ENCODE measurements at regions of chr7 and their contacts with region 1.

Region 1: DNA sequence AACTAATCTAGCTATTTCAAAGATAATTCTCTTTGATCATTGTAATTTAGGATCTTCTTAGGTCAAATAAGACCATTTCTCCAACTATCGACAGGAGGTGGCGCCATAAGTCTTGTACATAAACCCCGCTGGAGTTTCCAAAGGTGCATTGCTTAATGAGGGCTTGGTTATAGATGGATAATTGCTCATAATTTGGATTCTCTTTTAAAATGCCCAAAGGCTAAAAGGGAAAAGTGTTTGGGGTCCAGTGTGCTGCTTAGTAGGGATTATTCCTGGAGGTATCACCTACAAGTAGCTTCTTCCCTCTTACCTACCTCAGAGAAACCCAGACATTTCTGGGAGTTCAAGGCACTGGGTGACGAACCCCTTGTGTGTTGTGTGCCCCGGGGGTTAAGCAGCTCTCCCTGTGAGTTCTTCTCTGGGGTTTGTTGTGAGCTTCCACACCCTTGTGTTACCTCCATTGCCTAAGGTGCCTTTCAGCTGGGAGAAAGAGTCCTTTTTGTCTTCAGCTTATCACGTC is 75.2 kb downstream of the PAXIP1 start:
- DNase-seq: peak; percentile 77 to 92 (median 80)
- ATAC-seq: peak; percentile 87
- H3K4me3 ChIP-seq: peak overlapping the region; percentile 47
- H3K27ac ChIP-seq: peak overlapping the region; percentile 23
- H3K4me1 ChIP-seq: peaks cover 6 to 8% of the 10 kb centered on the region in 2 experiments; a peak in 3 of 5 replicates
- H3K27me3 ChIP-seq: peaks cover 0 to 11% of the 10 kb centered on the region in 2 experiments; a peak in 2 of 5 replicates
- CTCF ChIP-seq: peak; percentile 77 to 94 (median 80)
- EP300 ChIP-seq: no peak
- POLR2A ChIP-seq: no peak
- RAD21 ChIP-seq: peak; percentile 91 to 94

Region 2: GRCh38 chr7:154953006-154953684 is 25.5 kb after region 1 on chr7:
- CTCF ChIA-PET with region 1: interaction called, 14 read pairs
- POLR2A ChIA-PET with region 1: interaction called, 7 read pairs
- in situ Hi-C with region 1: no loop called
- intact Hi-C with region 1: no loop called
- DNase-seq: peak; percentile 65 to 80 (median 75)
- ATAC-seq: peak; percentile 98
- H3K4me3 ChIP-seq: no peak overlapping the region
- H3K27ac ChIP-seq: no peak overlapping the region
- H3K4me1 ChIP-seq: no peaks in the 10 kb centered on the region
- H3K27me3 ChIP-seq: no peaks in the 10 kb centered on the region
- CTCF ChIP-seq: peak; percentile 82 to 94 (median 88)
- EP300 ChIP-seq: no peak
- POLR2A ChIP-seq: no peak
- RAD21 ChIP-seq: peak; percentile 28 to 40; a peak in 2 of 4 replicates

Region 3: GRCh38 chr7:155084969-155085368 is 157.3 kb after region 1 on chr7:
- CTCF ChIA-PET with region 1: no interaction called
- POLR2A ChIA-PET with region 1: no interaction called
- in situ Hi-C with region 1: no loop called
- intact Hi-C with region 1: no loop called
- DNase-seq: no peak
- ATAC-seq: no peak
- H3K4me3 ChIP-seq: no peak overlapping the region
- H3K27ac ChIP-seq: no peak overlapping the region
- H3K4me1 ChIP-seq: no peaks in the 10 kb centered on the region
- H3K27me3 ChIP-seq: peaks cover 14 to 43% of the 10 kb centered on the region in 2 experiments
- CTCF ChIP-seq: no peak
- EP300 ChIP-seq: no peak
- POLR2A ChIP-seq: no peak
- RAD21 ChIP-seq: no peak

Region 4: DNA sequence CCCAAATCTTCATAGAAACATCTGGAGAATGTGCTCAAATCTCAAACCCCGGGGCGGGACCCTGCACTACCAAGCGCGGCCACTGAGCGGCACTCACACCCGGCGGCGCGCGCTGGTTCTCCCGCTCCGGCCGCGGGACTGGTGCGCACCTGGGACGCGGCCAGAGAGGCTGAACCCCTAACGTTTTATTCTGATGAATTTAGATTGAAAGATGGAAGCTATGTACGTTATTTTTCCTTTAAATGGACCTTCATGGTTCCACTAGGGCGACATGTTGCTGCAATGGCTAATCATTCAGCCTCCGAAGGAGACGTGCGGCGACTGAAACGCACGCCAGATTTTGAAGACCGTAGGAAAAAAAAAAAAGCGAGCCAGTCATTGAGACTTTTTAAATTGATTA is 263.0 kb after region 1 on chr7:
- CTCF ChIA-PET with region 1: no interaction called
- POLR2A ChIA-PET with region 1: no interaction called
- in situ Hi-C with region 1: no loop called
- intact Hi-C with region 1: loop called (anchors 5 kb)
- DNase-seq: peak; percentile 72 to 92 (median 89)
- ATAC-seq: peak; percentile 93
- H3K4me3 ChIP-seq: no peak overlapping the region
- H3K27ac ChIP-seq: no peak overlapping the region
- H3K4me1 ChIP-seq: peaks cover 0 to 7% of the 10 kb centered on the region in 2 experiments; a peak in 2 of 5 replicates
- H3K27me3 ChIP-seq: peaks cover 36 to 62% of the 10 kb centered on the region in 2 experiments
- CTCF ChIP-seq: peak; percentile 92 to 97 (median 95)
- EP300 ChIP-seq: no peak
- POLR2A ChIP-seq: no peak
- RAD21 ChIP-seq: peak; percentile 96 to 97

Region 5: GRCh38 chr7:155533827-155534690 is 606.4 kb after region 1 on chr7:
- CTCF ChIA-PET with region 1: no interaction called
- POLR2A ChIA-PET with region 1: no interaction called
- in situ Hi-C with region 1: no loop called
- intact Hi-C with region 1: loop called (anchors 5 kb)
- DNase-seq: peak; percentile 60 to 92 (median 90)
- ATAC-seq: peak; percentile 95
- H3K4me3 ChIP-seq: no peak overlapping the region
- H3K27ac ChIP-seq: no peak overlapping the region; the same call in 2 of the 3 replicates
- H3K4me1 ChIP-seq: peaks cover 0 to 16% of the 10 kb centered on the region in 2 experiments; a peak in 3 of 5 replicates
- H3K27me3 ChIP-seq: peaks cover 72 to 85% of the 10 kb centered on the region in 2 experiments
- CTCF ChIP-seq: peak; percentile 71 to 89 (median 81)
- EP300 ChIP-seq: no peak
- POLR2A ChIP-seq: no peak
- RAD21 ChIP-seq: peak; percentile 36 to 66

Region 6: GRCh38 chr7:155769701-155770100 is 842.0 kb after region 1 on chr7:
- CTCF ChIA-PET with region 1: interaction called, 6 read pairs
- POLR2A ChIA-PET with region 1: no interaction called
- in situ Hi-C with region 1: no loop called
- intact Hi-C with region 1: loop called (anchors 5 kb)
- DNase-seq: no peak
- ATAC-seq: no peak
- H3K4me3 ChIP-seq: no peak overlapping the region
- H3K27ac ChIP-seq: no peak overlapping the region
- H3K4me1 ChIP-seq: no peaks in the 10 kb centered on the region
- H3K27me3 ChIP-seq: no peaks in the 10 kb centered on the region
- CTCF ChIP-seq: no peak
- EP300 ChIP-seq: no peak
- POLR2A ChIP-seq: no peak
- RAD21 ChIP-seq: no peak

Measured in K562 (cell line).